ENCODE measurements at regions of chr2 and their contacts with region 1.

Region 1: DNA sequence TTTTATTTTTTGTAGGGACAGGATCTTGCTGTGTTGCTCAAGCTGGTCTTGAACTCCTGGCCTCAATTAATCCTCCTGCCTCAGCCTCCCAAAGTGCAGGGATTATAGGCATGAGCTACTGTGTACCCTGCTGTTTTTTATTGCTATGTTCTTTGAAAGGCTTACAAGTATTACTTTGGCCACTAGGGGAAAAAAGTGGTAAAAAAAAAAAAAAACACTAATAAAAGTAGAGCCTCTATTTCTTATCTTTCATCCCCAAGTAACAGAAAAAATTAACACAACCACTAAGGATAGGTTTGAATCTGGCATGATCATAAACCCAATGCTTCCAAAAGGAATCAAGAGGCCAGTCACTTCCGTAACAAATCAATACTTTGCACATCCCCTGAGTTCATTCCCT is 11.6 kb downstream of the NOL10 start:
- DNase-seq: no peak
- ATAC-seq: no peak
- H3K4me3 ChIP-seq: no peak overlapping the region
- H3K27ac ChIP-seq: no peak overlapping the region
- H3K4me1 ChIP-seq: no peaks in the 10 kb centered on the region
- H3K27me3 ChIP-seq: no peaks in the 10 kb centered on the region
- CTCF ChIP-seq: no peak; the same call in 1 of the 2 replicates

Region 2: DNA sequence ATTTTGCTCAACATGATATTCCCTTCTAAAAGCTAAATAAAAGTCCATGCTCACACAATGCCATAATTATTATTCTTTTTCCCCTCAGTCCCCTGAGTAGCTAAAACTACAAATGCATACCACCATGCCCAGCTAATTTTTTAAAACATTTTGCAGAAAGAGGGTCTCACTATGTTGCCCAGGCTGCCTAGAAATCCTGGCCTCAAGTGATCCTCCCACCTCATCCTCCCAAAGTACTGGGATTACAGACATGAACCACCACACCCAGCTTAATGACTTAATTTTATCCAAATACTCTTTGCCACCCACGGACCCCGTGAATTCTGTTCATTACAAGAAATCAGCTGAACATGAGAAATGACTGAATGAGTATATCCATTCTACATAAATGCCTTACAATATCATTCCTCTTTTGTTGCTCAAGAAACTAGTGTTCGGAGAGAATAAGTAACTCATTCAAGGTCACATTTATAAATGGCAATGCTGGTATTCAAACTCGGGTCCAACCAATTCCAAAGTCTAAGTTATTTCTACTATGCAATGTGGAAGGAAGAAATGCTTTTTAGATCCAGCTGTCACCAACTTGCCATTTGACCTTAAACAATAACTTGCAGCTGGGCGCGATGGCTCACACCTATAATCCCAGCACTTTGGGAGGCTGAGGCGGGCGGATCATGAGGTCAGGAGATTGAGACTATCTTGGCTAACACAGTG is 48.2 kb before region 1 on chr2:
- CTCF ChIA-PET with region 1: interaction called, 11 read pairs
- POLR2A ChIA-PET with region 1: no interaction called
- in situ Hi-C with region 1: no loop called
- intact Hi-C with region 1: no loop called
- DNase-seq: no peak
- ATAC-seq: no peak
- H3K4me3 ChIP-seq: no peak overlapping the region
- H3K27ac ChIP-seq: no peak overlapping the region
- H3K4me1 ChIP-seq: no peaks in the 10 kb centered on the region
- H3K27me3 ChIP-seq: no peaks in the 10 kb centered on the region
- CTCF ChIP-seq: no peak

Measured in Panc1 (cell line).